ENCODE measurements at regions of chr2 and their contacts with region 1.

Region 1: DNA sequence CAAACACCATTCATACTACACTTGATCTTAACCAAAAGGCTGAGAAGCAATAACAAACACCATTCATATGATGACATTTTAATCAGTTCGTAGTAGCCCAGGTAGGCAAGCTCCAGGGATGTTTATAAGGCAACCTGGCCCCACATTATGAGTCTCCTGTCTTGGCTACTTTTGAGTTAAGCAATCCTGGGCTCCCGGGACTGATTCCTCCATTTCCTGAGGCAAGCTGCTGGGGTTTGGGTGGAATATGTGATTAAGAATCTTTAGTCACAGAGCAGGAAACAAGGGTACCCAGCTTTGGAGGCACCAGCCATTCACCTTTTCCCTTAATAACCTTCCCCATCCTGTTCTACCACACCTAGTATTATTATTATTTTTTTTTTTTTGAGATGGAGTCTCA is 24.5 kb upstream of the SPRED2 start:
- DNase-seq: no peak
- ATAC-seq: no peak
- H3K4me3 ChIP-seq: no peak overlapping the region
- H3K4me3 Mint-ChIP-seq: no peak overlapping the region
- H3K27ac ChIP-seq: no peak overlapping the region
- H3K27ac Mint-ChIP-seq: no peak overlapping the region
- H3K4me1 ChIP-seq: no peaks in the 10 kb centered on the region
- H3K4me1 Mint-ChIP-seq: no peaks in the 10 kb centered on the region
- H3K27me3 ChIP-seq: peaks cover 0 to 14% of the 10 kb centered on the region in 2 experiments
- H3K27me3 Mint-ChIP-seq: peaks cover 28 to 41% of the 10 kb centered on the region in 2 donors

Region 2: GRCh38 chr2:65409045-65409444 is 47.8 kb before region 1 on chr2:
- CTCF ChIA-PET with region 1: interaction called in 1 of 2 experiments, 12 read pairs
- POLR2A ChIA-PET with region 1: no interaction called
- DNase-seq: no peak
- ATAC-seq: no peak
- H3K4me3 ChIP-seq: no peak overlapping the region
- H3K4me3 Mint-ChIP-seq: no peak overlapping the region
- H3K27ac ChIP-seq: no peak overlapping the region
- H3K27ac Mint-ChIP-seq: no peak overlapping the region
- H3K4me1 ChIP-seq: peaks cover 0 to 10% of the 10 kb centered on the region in 2 experiments
- H3K4me1 Mint-ChIP-seq: peaks cover 13 to 22% (median 14%) of the 10 kb centered on the region in 3 donors
- H3K27me3 ChIP-seq: no peaks in the 10 kb centered on the region
- H3K27me3 Mint-ChIP-seq: peaks cover 0 to 11% of the 10 kb centered on the region in 2 donors

Region 3: DNA sequence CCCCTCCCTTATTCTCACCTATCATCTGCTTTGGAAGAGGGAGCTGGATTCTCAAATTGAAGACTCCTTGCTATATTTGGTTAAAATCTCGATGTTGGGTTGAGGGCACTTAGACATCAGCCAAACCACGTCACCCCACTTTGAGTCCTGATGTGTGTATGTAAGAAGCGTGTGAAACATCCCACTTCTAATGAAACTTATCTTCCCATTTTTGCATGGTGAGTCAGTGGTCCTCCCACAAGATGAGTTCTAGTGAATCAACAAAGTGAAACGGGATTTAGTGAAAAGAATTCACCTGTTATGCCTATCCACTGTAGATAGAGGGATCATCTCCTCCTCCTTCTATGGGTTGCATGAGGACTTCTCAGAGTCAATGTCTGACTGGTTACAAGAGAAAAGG is 26.9 kb after region 1 on chr2:
- CTCF ChIA-PET with region 1: no interaction called
- POLR2A ChIA-PET with region 1: no interaction called
- DNase-seq: no peak
- ATAC-seq: no peak
- H3K4me3 ChIP-seq: no peak overlapping the region
- H3K4me3 Mint-ChIP-seq: no peak overlapping the region
- H3K27ac ChIP-seq: no peak overlapping the region
- H3K27ac Mint-ChIP-seq: no peak overlapping the region
- H3K4me1 ChIP-seq: no peaks in the 10 kb centered on the region
- H3K4me1 Mint-ChIP-seq: no peaks in the 10 kb centered on the region
- H3K27me3 ChIP-seq: peaks cover 0 to 14% of the 10 kb centered on the region in 2 experiments
- H3K27me3 Mint-ChIP-seq: peaks cover 13 to 28% of the 10 kb centered on the region in 2 donors

Region 4: DNA sequence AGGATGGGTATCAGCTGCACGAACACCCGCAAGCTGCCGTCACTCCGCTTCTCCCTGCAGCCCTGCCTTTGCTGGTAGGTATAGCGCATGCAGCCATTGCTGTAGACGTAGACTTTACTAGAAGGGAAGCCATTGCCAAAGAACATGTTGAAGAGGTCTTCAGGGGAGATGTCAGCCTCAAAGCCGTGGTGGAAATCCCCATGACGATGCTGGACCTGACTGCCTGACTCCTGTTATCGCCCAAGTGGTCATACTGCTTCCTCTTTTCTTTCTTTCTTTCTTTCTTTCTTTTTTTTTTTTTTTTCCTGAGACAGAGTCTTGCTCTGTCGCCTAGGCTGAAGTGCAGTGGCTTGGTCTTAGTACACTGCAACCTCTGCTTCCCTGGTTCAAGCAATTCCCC is 44.2 kb after region 1 on chr2:
- CTCF ChIA-PET with region 1: no interaction called
- POLR2A ChIA-PET with region 1: no interaction called
- DNase-seq: no peak
- ATAC-seq: no peak
- H3K4me3 ChIP-seq: no peak overlapping the region
- H3K4me3 Mint-ChIP-seq: no peak overlapping the region
- H3K27ac ChIP-seq: no peak overlapping the region
- H3K27ac Mint-ChIP-seq: no peak overlapping the region
- H3K4me1 ChIP-seq: no peaks in the 10 kb centered on the region
- H3K4me1 Mint-ChIP-seq: no peaks in the 10 kb centered on the region
- H3K27me3 ChIP-seq: peaks cover 0 to 8% of the 10 kb centered on the region in 2 experiments
- H3K27me3 Mint-ChIP-seq: peaks cover 6 to 13% of the 10 kb centered on the region in 2 donors

Region 5: GRCh38 chr2:65514555-65515195 is 57.8 kb after region 1 on chr2:
- CTCF ChIA-PET with region 1: no interaction called
- POLR2A ChIA-PET with region 1: no interaction called
- DNase-seq: no peak
- ATAC-seq: no peak
- H3K4me3 ChIP-seq: no peak overlapping the region
- H3K4me3 Mint-ChIP-seq: no peak overlapping the region
- H3K27ac ChIP-seq: no peak overlapping the region
- H3K27ac Mint-ChIP-seq: no peak overlapping the region
- H3K4me1 ChIP-seq: no peaks in the 10 kb centered on the region
- H3K4me1 Mint-ChIP-seq: no peaks in the 10 kb centered on the region
- H3K27me3 ChIP-seq: no peaks in the 10 kb centered on the region
- H3K27me3 Mint-ChIP-seq: peaks cover 0 to 9% of the 10 kb centered on the region in 2 donors

Measured in T-cell (primary cell).